Activated B cell treated with CpG ODN at 0.5 μM for 24 hours (primary cell): ENCODE measurements at regions of chrX and their contacts with region 1.

Region 1: GRCh38 chrX:39491548-39492297 is 606.0 kb downstream of the BCOR start:
- DNase-seq: peak; percentile 36
- ATAC-seq: peak; percentile 91
- H3K4me3 Mint-ChIP-seq: peak overlapping the region; percentile 70
- H3K27ac Mint-ChIP-seq: peak overlapping the region; percentile 84
- H3K4me1 Mint-ChIP-seq: peaks cover 52% of the 10 kb centered on the region
- H3K27me3 Mint-ChIP-seq: no peaks in the 10 kb centered on the region
- CTCF ChIP-seq: no peak

Region 2: GRCh38 chrX:39196192-39197102 is 295.3 kb before region 1 on chrX:
- CTCF ChIA-PET with region 1: no interaction called
- POLR2A ChIA-PET with region 1: no interaction called
- intact Hi-C with region 1: loop called (anchors 5 kb)
- DNase-seq: peak; percentile 16
- ATAC-seq: peak; percentile 95
- H3K4me3 Mint-ChIP-seq: peak overlapping the region; percentile 65
- H3K27ac Mint-ChIP-seq: peak overlapping the region; percentile 56
- H3K4me1 Mint-ChIP-seq: peaks cover 19% of the 10 kb centered on the region
- H3K27me3 Mint-ChIP-seq: peaks cover 7% of the 10 kb centered on the region
- CTCF ChIP-seq: no peak

Region 3: GRCh38 chrX:39439906-39440798 is 51.6 kb before region 1 on chrX:
- CTCF ChIA-PET with region 1: no interaction called
- POLR2A ChIA-PET with region 1: no interaction called
- intact Hi-C with region 1: loop called (anchors 5 kb)
- DNase-seq: no peak
- ATAC-seq: peak; percentile 67
- H3K4me3 Mint-ChIP-seq: peak overlapping the region; percentile 74
- H3K27ac Mint-ChIP-seq: peak overlapping the region; percentile 88
- H3K4me1 Mint-ChIP-seq: peaks cover 57% of the 10 kb centered on the region
- H3K27me3 Mint-ChIP-seq: no peaks in the 10 kb centered on the region
- CTCF ChIP-seq: no peak

Region 4: GRCh38 chrX:39560271-39560670 is 68.5 kb after region 1 on chrX:
- CTCF ChIA-PET with region 1: no interaction called
- POLR2A ChIA-PET with region 1: no interaction called
- intact Hi-C with region 1: loop called (anchors 5 kb)
- DNase-seq: no peak
- ATAC-seq: no peak
- H3K4me3 Mint-ChIP-seq: no peak overlapping the region
- H3K27ac Mint-ChIP-seq: no peak overlapping the region
- H3K4me1 Mint-ChIP-seq: peaks cover 22% of the 10 kb centered on the region
- H3K27me3 Mint-ChIP-seq: no peaks in the 10 kb centered on the region
- CTCF ChIP-seq: no peak